Ovary (tissue), 10 donors: ENCODE measurements at regions of chr11 and their contacts with region 1.

Region 1: GRCh38 chr11:11760838-11761237 is 80.9 kb upstream of the USP47 start:
- DNase-seq: no peak
- H3K4me3 ChIP-seq: no peak overlapping the region
- H3K27ac ChIP-seq: no peak overlapping the region
- H3K4me1 ChIP-seq: no peaks in the 10 kb centered on the region
- H3K27me3 ChIP-seq: no peaks in the 10 kb centered on the region
- CTCF ChIP-seq: no peak
- EP300 ChIP-seq: no peak
- POLR2A ChIP-seq: no peak

Region 2: GRCh38 chr11:11510939-11511338 is 249.9 kb before region 1 on chr11:
- intact Hi-C with region 1: loop called in 1 of 4 experiments (anchors 10 kb)
- DNase-seq: no peak
- H3K4me3 ChIP-seq: no peak overlapping the region
- H3K27ac ChIP-seq: no peak overlapping the region
- H3K4me1 ChIP-seq: no peaks in the 10 kb centered on the region
- H3K27me3 ChIP-seq: no peaks in the 10 kb centered on the region
- CTCF ChIP-seq: no peak
- EP300 ChIP-seq: no peak
- POLR2A ChIP-seq: no peak

Region 3: DNA sequence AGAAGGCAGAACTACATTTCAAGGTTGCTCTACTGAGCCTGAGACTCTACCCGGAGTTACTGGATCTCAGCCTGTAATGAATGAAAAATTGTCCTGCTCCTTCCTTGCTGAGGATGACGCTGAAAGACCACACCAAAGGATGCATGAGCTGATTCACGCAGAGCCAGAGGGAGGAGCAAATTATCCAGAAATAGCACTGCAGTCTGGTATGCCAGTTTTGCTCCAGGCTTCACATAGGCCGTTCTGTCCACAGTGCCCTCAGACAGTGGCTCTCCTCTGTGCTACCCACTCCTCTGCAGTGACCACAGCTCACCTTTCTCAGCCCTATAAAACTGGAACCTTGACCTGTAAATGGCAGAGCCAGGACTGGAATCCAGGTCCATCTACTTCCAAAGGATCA is 59.8 kb before region 1 on chr11:
- intact Hi-C with region 1: no loop called
- DNase-seq: no peak
- H3K4me3 ChIP-seq: no peak overlapping the region
- H3K27ac ChIP-seq: no peak overlapping the region
- H3K4me1 ChIP-seq: no peaks in the 10 kb centered on the region
- H3K27me3 ChIP-seq: no peaks in the 10 kb centered on the region
- CTCF ChIP-seq: no peak
- EP300 ChIP-seq: no peak
- POLR2A ChIP-seq: no peak